ENCODE measurements at regions of chr17 and their contacts with region 1.

Region 1: DNA sequence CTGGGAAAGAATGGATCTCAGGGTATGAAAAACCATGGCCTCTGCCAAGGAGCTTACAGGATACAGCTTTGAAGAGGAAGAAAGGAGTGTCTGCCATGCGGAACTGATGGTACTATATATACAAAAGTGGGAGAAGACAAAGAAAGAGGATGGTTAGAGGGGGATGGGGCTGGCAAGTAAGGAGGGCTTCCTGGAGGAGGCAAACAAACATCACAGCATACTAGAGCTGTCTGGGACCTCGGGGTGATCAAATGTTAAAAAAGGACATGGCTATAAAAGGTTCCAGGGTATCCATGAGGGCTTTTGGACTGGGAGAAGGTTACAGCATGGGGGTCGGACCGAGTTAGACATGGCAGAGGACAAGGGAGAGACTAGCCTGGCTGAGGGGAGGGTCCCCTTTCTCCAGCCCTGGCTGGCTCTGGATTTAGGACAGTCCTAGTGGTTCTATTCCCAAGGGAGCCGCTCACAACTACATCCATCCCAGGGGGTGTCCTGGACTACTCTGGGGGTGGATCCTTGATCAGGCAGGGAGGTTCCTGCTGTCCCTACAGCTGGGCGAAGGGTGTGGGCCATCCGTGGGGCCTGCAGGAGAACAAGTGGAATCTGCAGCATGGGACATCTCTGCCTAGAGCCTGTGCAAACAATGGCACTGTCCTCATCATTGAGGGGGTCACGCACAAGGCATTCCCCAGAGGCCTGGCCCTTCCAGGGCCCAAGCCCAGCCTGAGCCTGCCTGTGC is 12.2 kb downstream of the WNT9B start:
- DNase-seq: no peak

Region 2: DNA sequence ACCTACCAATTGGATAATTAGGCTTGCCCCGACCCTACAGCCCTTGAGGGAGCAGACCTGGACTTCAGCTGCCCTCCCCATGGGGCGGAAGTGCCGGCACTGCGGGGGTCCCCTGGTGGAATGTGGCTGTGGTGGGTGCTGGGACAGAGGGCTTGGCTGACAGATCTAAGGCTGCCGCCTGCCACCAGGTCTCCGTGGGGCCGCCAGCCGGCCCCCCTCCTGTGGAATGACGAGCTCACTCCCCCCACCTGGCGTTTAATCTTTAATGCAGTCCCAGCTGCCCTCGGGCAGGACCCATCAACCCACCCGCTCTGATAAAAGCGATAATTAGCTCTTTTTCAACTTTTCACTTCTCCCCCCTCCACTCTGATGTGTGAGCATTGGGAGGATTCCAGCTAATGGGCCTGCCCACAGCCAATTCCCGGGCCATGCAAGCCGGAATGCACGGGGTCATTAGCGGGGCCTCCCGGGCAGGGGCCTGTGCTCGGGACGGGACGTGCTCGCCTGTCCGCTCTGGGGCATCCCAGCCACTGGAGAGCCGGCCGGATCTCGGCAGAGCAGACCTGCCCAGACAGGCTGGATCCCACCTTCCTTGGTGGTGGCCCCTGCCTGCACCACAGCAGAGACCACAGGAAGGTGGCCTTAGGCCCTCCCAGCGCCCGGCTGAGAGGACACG is 31.1 kb after region 1 on chr17:
- intact Hi-C with region 1: loop called in 1 of 2 experiments (anchors 1 kb)
- DNase-seq: no peak

Measured in posterior vena cava (tissue), 2 donors.